Pancreas (tissue), 10 donors: ENCODE measurements at regions of chr3 and their contacts with region 1.

Region 1: DNA sequence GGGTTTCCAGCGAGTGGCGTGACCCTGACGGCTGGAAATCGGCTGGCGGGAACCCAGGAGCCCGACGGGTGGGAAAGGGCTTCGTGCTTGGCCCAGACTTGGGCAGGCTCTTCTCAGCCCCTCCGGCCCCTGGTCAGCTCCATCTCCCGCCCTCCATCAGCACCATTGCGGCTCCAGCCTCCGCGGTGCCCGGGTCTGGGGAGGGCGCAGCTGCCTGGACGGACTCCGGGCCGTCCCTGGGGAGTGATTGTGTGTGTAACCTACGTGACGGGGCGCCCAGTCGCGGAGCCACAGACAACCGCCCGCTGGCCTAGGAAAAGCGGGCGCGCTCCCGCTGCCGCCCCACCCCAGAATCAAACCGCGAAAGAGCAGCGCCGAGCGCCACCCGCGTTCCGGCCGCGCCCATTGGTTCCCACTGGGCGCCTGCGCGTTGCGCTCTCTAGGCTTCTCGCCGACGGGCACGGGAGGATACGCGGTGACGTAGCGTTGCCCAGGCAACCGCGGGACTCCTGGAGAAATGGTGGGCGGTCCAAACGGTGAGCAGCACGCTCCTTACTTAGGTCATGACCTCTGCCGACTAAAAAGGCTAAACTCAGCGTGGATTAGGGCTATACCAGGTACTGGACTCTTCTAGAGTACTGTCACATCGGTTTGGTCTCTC is at the start of gene CFAP20DC:
- DNase-seq: peak; percentile 85 to 96 (median 92)
- ATAC-seq: peak; percentile 98 to 99 (median 99)
- H3K4me3 ChIP-seq: peak within 1 kb of the TSS; percentile 57 to 85 (median 72)
- H3K27ac ChIP-seq: peak within 1 kb of the TSS in 2 of 4 donors; percentile 62 to 63
- H3K4me1 ChIP-seq: peaks cover 0 to 3% (median 0%) of the 10 kb centered on the region in 3 donors
- H3K27me3 ChIP-seq: no peaks in the 10 kb centered on the region
- CTCF ChIP-seq: no peak
- total RNA-seq, gene CFAP20DC: 0.23 to 1.2 (median 0.37) TPM

Region 2: DNA sequence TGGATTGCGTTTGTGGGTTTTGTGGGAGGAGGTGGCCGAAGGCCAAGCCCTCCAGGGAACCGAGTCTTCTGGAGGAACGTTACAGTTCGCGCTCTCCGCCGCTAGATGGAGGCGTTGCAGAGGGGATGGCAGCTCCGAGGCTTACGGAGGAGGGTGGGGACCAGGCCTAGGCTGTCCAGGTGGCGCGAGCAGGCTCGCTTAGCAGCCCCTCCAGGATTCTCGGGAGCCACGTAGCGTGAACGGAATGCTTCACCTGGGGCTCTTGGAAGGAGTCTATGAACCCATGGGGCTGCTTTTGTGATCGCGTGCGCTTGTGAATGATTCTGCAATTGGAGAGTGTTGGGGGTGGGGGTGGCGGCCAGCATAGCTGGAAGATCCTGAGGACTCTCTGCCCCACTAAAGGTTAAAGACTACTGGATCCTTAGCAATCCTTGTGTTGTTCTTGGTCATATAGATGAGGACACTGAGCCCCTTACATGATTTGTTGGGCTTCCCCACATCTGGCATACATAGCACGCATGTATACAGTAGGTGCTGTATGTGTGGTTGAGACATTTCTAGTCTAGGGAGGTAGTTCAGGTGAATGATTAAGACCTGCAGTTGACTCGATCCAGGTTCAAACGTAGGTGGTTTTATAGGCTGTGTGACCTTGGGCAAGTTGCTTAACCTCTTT is 409.0 kb before region 1 on chr3:
- intact Hi-C with region 1: loop called in 1 of 3 experiments (anchors 10 kb)
- DNase-seq: peak; percentile 62 to 90 (median 78)
- ATAC-seq: peak; percentile 87 to 99 (median 97)
- H3K4me3 ChIP-seq: no peak overlapping the region
- H3K27ac ChIP-seq: no peak overlapping the region
- H3K4me1 ChIP-seq: no peaks in the 10 kb centered on the region
- H3K27me3 ChIP-seq: no peaks in the 10 kb centered on the region
- CTCF ChIP-seq: peak; percentile 70 to 83 (median 78)

Region 3: DNA sequence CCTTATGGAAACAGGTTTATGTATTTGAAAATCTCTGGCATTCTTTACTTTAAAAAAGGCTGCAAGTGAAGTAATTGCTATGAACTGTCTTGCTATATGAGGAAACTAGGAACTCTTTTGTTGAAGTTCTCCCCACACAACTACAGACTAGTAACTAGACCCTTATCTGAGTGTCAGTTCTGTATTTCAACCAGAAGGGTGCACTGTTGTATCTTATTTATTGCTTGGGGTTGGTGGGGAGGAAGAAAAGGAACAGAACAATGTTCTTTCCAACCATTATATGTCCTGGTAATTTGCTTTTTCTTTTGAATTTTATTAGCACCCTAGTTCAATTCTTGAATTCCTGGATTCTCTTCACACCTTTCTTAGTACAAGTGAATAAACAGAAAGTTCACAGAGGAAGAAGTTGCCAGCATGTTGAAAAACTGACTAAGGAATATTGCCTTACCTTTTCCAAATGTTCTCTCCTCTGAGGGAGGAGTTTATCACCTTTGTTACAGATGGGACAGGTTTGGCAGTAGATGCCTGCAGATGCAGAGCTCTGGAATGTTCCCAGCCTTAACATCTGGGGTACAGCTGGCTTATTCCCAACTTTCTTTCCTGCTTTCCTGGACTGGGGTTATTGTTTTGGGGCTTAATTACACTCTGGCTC is 162.5 kb after region 1 on chr3:
- intact Hi-C with region 1: no loop called
- DNase-seq: no peak
- ATAC-seq: peak; percentile 77 to 95 (median 93)
- H3K4me3 ChIP-seq: no peak overlapping the region
- H3K27ac ChIP-seq: no peak overlapping the region
- H3K4me1 ChIP-seq: peaks cover 0 to 6% (median 0%) of the 10 kb centered on the region in 3 donors
- H3K27me3 ChIP-seq: no peaks in the 10 kb centered on the region
- CTCF ChIP-seq: peak in 3 of 4 donors; percentile 58 to 64 (median 63)

Region 4: GRCh38 chr3:59341459-59341858 is 291.7 kb after region 1 on chr3:
- intact Hi-C with region 1: no loop called
- DNase-seq: no peak
- ATAC-seq: peak in 2 of 4 donors; percentile 66 to 69
- H3K4me3 ChIP-seq: no peak overlapping the region
- H3K27ac ChIP-seq: no peak overlapping the region
- H3K4me1 ChIP-seq: no peaks in the 10 kb centered on the region
- H3K27me3 ChIP-seq: no peaks in the 10 kb centered on the region
- CTCF ChIP-seq: no peak

Region 5: DNA sequence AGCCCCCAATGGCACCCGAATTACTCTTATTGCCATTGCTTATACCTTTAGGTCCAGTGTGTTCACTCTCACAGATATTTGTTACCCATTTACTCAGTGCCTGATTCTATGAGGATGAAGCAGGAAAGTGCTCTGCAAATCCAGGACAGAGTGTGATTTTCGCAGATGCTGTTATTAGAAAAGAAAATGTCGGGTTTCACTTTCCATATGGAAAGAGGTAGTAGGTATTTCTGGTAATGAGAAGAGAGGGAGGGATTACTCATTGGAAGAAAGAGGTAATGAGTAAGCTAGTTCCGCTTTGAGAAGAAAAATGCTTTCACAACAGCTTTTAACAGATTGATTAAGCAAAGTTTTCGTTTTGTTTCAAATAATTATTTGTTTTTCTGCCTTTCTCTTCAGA is 336.4 kb after region 1 on chr3:
- intact Hi-C with region 1: no loop called
- DNase-seq: no peak
- ATAC-seq: no peak
- H3K4me3 ChIP-seq: no peak overlapping the region
- H3K27ac ChIP-seq: no peak overlapping the region
- H3K4me1 ChIP-seq: no peaks in the 10 kb centered on the region
- H3K27me3 ChIP-seq: no peaks in the 10 kb centered on the region
- CTCF ChIP-seq: no peak

Region 6: DNA sequence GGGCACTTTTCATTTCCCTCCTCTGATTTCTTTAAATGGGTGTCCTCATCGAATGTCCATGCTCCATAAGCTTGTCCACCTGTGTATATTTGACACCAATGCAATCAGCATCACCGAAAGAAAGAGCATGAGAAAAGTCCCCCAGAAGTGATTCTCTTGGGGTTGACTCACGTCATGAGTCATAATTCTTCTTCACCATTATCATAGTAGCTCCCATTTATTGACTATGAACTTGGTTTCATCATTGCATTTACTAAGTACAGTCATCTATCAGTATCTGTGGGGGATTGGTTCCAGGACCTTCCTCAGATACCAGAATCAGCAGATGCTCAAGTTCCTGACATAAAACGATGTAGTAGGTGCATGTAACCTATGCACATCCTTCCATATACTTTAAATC is 372.5 kb after region 1 on chr3:
- intact Hi-C with region 1: no loop called
- DNase-seq: no peak
- ATAC-seq: no peak
- H3K4me3 ChIP-seq: no peak overlapping the region
- H3K27ac ChIP-seq: no peak overlapping the region
- H3K4me1 ChIP-seq: no peaks in the 10 kb centered on the region
- H3K27me3 ChIP-seq: no peaks in the 10 kb centered on the region
- CTCF ChIP-seq: no peak